ENCODE measurements at regions of chr11 and their contacts with region 1.

Region 1: GRCh38 chr11:111841370-111842053 is 29.9 kb downstream of the ALG9 start:
- DNase-seq: peak; percentile 69 to 81 (median 72)
- H3K4me3 ChIP-seq: no peak overlapping the region
- H3K4me3 Mint-ChIP-seq: no peak overlapping the region
- H3K27ac ChIP-seq: no peak overlapping the region
- H3K27ac Mint-ChIP-seq: peak overlapping the region in 1 of 7 donors; percentile 25
- H3K4me1 ChIP-seq: peaks cover 5% of the 10 kb centered on the region
- H3K4me1 Mint-ChIP-seq: peaks cover 2 to 6% (median 4%) of the 10 kb centered on the region in 4 donors
- H3K27me3 ChIP-seq: no peaks in the 10 kb centered on the region
- H3K27me3 Mint-ChIP-seq: no peaks in the 10 kb centered on the region

Region 2: GRCh38 chr11:111283945-111284481 is 557.5 kb before region 1 on chr11:
- CTCF ChIA-PET with region 1: no interaction called
- POLR2A ChIA-PET with region 1: no interaction called
- intact Hi-C with region 1: loop called (anchors 10 kb)
- DNase-seq: no peak
- H3K4me3 ChIP-seq: no peak overlapping the region
- H3K4me3 Mint-ChIP-seq: no peak overlapping the region
- H3K27ac ChIP-seq: no peak overlapping the region
- H3K27ac Mint-ChIP-seq: peak overlapping the region in 2 of 7 donors; percentile 5 to 53
- H3K4me1 ChIP-seq: no peaks in the 10 kb centered on the region
- H3K4me1 Mint-ChIP-seq: no peaks in the 10 kb centered on the region
- H3K27me3 ChIP-seq: no peaks in the 10 kb centered on the region
- H3K27me3 Mint-ChIP-seq: peaks cover 0 to 1% of the 10 kb centered on the region in 2 donors

Region 3: DNA sequence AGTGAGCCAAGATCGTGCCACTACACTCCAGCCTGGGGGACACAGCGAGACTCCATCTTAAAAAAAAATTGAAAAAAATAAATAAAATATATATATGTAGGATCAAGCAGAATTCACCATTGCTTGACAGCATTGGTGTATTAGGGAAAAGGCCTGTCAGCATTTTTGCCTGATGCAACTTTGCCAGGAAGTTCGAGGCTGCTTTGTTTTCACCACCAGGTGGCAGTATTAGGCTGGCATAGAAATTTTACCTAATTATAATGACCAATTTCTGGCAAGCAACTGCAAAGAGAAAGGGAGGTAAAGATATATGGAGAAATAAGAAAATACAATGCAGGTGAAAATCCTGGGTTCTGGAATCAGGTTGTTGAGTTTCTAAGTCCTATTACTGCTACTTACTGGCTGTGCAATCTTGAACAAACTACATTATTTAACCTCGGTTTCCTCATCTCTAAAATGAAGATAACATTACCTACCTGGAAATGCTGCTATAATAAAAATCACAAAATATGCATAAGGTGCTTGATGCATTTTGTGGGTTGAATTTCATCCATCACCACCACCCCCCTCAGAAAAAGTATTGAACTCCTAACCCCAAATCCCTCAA is 276.3 kb before region 1 on chr11:
- CTCF ChIA-PET with region 1: interaction called, 22 read pairs
- POLR2A ChIA-PET with region 1: no interaction called
- intact Hi-C with region 1: loop called (anchors 1 kb)
- DNase-seq: peak; percentile 47 to 58 (median 57)
- H3K4me3 ChIP-seq: no peak overlapping the region
- H3K4me3 Mint-ChIP-seq: no peak overlapping the region
- H3K27ac ChIP-seq: no peak overlapping the region
- H3K27ac Mint-ChIP-seq: no peak overlapping the region
- H3K4me1 ChIP-seq: no peaks in the 10 kb centered on the region
- H3K4me1 Mint-ChIP-seq: no peaks in the 10 kb centered on the region
- H3K27me3 ChIP-seq: no peaks in the 10 kb centered on the region
- H3K27me3 Mint-ChIP-seq: peaks cover 0 to 4% of the 10 kb centered on the region in 2 donors

Region 4: DNA sequence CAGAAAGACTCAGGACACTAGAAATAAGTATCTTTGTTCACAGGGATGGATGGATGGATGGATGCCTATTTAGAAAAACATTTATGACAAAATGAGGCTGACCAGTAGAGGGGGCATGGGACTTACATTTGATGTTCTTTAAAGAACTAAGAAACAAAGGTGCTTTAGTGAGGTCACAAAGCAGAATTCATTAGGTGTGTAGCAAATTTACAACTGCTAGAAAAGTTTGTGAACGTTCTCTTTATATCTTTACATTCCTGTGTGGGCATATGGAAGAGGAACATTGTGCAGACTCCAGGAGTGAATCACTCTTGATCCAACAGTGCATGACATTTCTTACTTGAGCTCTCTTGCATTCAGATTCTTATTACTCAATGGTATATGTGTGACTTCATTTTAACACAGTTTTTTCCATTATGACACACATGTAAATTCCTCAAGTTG is 255.1 kb before region 1 on chr11:
- CTCF ChIA-PET with region 1: interaction called, 83 read pairs
- POLR2A ChIA-PET with region 1: no interaction called
- intact Hi-C with region 1: loop called (anchors 1 kb)
- DNase-seq: peak; percentile 51 to 62 (median 59)
- H3K4me3 ChIP-seq: no peak overlapping the region
- H3K4me3 Mint-ChIP-seq: no peak overlapping the region
- H3K27ac ChIP-seq: no peak overlapping the region
- H3K27ac Mint-ChIP-seq: no peak overlapping the region
- H3K4me1 ChIP-seq: no peaks in the 10 kb centered on the region
- H3K4me1 Mint-ChIP-seq: no peaks in the 10 kb centered on the region
- H3K27me3 ChIP-seq: no peaks in the 10 kb centered on the region
- H3K27me3 Mint-ChIP-seq: peaks cover 1 to 3% of the 10 kb centered on the region in 2 donors

Region 5: DNA sequence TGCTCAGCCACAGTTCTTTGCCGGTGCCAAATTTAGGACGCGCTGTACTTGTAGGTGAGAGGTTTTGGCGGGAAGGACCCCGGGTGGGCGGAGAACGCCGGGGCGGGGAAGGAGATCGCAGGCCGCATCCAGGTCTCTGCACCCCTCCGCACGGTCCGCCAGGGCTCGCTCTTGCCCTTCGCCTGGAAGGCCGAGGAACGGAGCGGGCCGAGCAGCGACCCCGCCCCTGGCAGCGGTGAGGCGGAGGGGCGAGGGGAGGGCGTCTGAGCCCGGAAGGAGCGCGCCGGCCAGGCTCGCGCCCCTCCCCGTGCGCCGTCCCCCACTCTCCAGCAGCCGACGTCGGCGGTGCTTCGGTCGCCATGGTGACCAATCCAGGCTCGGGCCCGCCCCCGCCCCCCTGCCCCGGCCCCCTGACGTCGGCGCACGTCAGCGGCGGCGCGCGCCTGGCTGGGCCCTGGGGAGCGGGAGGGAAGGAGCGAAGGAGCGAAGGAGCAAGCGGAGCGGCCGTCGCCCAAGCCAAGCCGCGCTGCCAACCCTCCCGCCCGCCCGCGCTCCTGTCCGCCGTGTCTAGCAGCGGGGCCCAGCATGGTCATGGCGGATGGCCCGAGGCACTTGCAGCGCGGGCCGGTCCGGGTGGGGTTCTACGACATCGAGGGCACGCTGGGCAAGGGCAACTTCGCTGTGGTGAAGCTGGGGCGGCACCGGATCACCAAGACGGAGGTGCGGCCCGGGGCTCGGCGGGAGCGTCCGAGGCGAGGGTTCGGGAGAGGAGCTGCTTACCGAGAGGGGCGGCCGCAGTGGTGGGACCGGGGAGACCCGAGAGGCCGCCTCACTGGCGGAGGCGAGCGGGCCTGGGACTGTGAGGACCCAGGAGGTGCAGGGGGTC is 239.3 kb before region 1 on chr11 and contains the start of gene SIK2:
- CTCF ChIA-PET with region 1: interaction called, 3 read pairs
- POLR2A ChIA-PET with region 1: no interaction called
- intact Hi-C with region 1: loop called (anchors 1 kb)
- DNase-seq: peak; percentile 87 to 90 (median 88)
- H3K4me3 ChIP-seq: peak within 1 kb of the TSS; percentile 66 to 75
- H3K4me3 Mint-ChIP-seq: peak within 1 kb of the TSS; percentile 90 to 99 (median 96)
- H3K27ac ChIP-seq: peak within 1 kb of the TSS; percentile 85
- H3K27ac Mint-ChIP-seq: peak within 1 kb of the TSS; percentile 91 to 99 (median 98)
- H3K4me1 ChIP-seq: peaks cover 24% of the 10 kb centered on the region
- H3K4me1 Mint-ChIP-seq: peaks cover 13 to 37% (median 19%) of the 10 kb centered on the region in 4 donors
- H3K27me3 ChIP-seq: no peaks in the 10 kb centered on the region
- H3K27me3 Mint-ChIP-seq: no peaks in the 10 kb centered on the region
- total RNA-seq, gene SIK2: 12.8 to 13.8 TPM

Region 6: GRCh38 chr11:111823131-111823530 is 18.4 kb before region 1 on chr11:
- CTCF ChIA-PET with region 1: interaction called, 15 read pairs
- POLR2A ChIA-PET with region 1: no interaction called
- intact Hi-C with region 1: no loop called
- DNase-seq: no peak
- H3K4me3 ChIP-seq: no peak overlapping the region
- H3K4me3 Mint-ChIP-seq: no peak overlapping the region
- H3K27ac ChIP-seq: no peak overlapping the region
- H3K27ac Mint-ChIP-seq: peak overlapping the region in 1 of 7 donors; percentile 37
- H3K4me1 ChIP-seq: no peaks in the 10 kb centered on the region
- H3K4me1 Mint-ChIP-seq: peaks cover 0 to 8% (median under 1%) of the 10 kb centered on the region in 4 donors
- H3K27me3 ChIP-seq: no peaks in the 10 kb centered on the region
- H3K27me3 Mint-ChIP-seq: no peaks in the 10 kb centered on the region

Measured in CD4-positive, alpha-beta memory T cell (primary cell).